Activated T-helper 1 cell treated with anti-CD3 and anti-CD28 coated beads, Interleukin-12 subunit alpha, Interleukin-12 subunit beta, Interleukin-2, Interleukin-4 antibody, amounts not matched to agents 30 ng/mL and 10 ng/mL and 1 ng/mL, durations not matched to agents 14 hours and 24 hours and 36 hours (primary cell): ENCODE measurements at regions of chr19 and their contacts with region 1.

Region 1: GRCh38 chr19:45092747-45093678 is at the start of gene PPP1R37:
- DNase-seq: peak; percentile 92
- H3K4me3 Mint-ChIP-seq: peak within 1 kb of the TSS; percentile 84
- H3K27ac Mint-ChIP-seq: peak within 1 kb of the TSS; percentile 97
- H3K4me1 Mint-ChIP-seq: peaks cover 46% of the 10 kb centered on the region
- H3K27me3 Mint-ChIP-seq: no peaks in the 10 kb centered on the region
- total RNA-seq, gene PPP1R37: 20.4 and 20.5 TPM in 2 replicates

Region 2: GRCh38 chr19:44890366-44891015 is 202.5 kb before region 1 on chr19:
- intact Hi-C with region 1: loop called (anchors 2 kb)
- DNase-seq: peak; percentile 100
- H3K4me3 Mint-ChIP-seq: peak overlapping the region; percentile 86
- H3K27ac Mint-ChIP-seq: peak overlapping the region; percentile 96
- H3K4me1 Mint-ChIP-seq: peaks cover 30% of the 10 kb centered on the region
- H3K27me3 Mint-ChIP-seq: no peaks in the 10 kb centered on the region

Region 3: GRCh38 chr19:45038931-45039893 is 53.8 kb before region 1 on chr19 and contains the start of gene CLASRP:
- intact Hi-C with region 1: loop called (anchors 1 kb)
- DNase-seq: peak; percentile 87
- H3K4me3 Mint-ChIP-seq: peak within 1 kb of the TSS; percentile 93
- H3K27ac Mint-ChIP-seq: peak within 1 kb of the TSS; percentile 95
- H3K4me1 Mint-ChIP-seq: peaks cover 23% of the 10 kb centered on the region
- H3K27me3 Mint-ChIP-seq: no peaks in the 10 kb centered on the region
- total RNA-seq, gene CLASRP: 106 and 116 TPM in 2 replicates

Region 4: DNA sequence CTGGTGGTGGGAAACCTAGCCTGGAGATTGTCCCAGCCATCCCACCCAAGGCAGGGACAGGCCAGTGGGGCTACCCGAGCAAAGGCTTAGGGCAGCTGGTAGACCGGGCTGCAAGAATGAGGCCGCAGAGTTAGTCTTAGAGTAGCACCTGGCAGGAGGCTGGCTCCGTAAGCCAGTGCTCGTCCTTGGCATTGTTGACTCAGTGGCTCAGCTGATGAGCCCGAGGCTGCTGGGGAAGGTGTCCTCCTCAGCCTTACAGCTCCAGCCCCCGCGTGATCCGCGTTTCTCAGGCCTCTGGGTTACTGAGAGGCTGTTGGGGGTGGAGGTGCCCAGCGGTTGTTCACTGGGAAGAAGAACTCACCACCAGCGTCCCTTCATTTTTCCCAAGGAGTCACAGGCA is 24.7 kb after region 1 on chr19:
- intact Hi-C with region 1: loop called (anchors 2 kb)
- DNase-seq: no peak
- H3K4me3 Mint-ChIP-seq: no peak overlapping the region
- H3K27ac Mint-ChIP-seq: peak overlapping the region; percentile 71
- H3K4me1 Mint-ChIP-seq: peaks cover 52% of the 10 kb centered on the region
- H3K27me3 Mint-ChIP-seq: no peaks in the 10 kb centered on the region

Region 5: DNA sequence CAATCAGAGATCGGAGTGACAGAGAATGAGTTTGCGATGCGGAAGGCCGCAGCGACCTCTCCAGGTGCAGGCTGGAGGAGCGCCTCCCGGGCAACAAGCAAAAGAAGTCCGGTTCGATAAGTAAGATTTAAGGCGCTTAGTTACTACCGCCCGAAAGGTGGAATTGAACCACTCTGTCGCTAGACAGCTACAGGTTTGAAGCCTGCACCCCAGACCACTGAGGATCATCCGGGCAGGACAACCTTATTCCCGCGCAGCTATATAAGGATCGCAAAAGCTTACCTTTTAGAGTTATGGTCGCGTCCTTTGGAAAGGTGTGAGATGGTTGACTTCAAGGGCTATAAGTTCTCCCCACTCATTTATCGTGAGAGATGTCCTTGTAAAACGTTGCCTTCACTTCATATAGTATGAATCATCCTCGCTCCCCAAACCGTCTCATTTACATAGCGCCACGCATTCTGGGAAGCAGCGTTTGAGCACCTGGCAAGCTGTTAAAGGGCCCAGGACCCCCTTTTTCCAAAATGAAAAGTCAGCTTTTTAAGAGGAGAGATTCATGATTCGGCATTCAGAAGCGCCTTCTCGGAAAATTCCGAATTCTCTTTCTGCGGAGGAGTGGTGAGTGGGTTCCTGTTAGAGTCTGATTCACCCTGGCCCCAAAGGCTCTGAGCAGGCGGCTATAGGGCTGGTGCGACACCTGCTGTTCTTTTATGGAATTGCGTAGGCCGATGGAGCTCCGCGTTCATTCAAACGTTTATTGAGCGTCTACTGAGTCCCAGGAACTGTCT is 385.6 kb after region 1 on chr19:
- intact Hi-C with region 1: loop called (anchors 5 kb)
- DNase-seq: peak; percentile 88
- H3K4me3 Mint-ChIP-seq: peak overlapping the region; percentile 77
- H3K27ac Mint-ChIP-seq: peak overlapping the region; percentile 95
- H3K4me1 Mint-ChIP-seq: peaks cover 29% of the 10 kb centered on the region
- H3K27me3 Mint-ChIP-seq: peaks cover 38% of the 10 kb centered on the region